B cell (primary cell): ENCODE measurements at regions of chr14 and their contacts with region 1.

Region 1: DNA sequence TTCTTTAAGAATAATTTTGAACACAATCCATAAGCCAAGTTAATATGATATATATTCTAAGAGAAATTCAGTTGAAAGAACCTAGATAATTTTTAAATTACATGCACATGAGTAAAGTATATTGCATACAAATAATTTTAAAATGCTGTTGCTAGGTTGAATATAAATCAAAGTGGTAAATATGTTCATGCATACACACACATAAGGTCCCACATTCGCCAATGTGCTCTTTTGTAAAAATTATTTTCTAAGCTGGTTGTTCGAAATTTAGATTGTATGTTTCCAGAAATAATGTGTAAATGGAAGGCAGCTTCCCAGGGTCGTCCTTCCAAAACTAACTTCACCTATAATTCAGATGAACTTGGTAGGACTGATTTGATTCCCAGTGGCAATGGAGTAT is 173.7 kb upstream of the CCDC196 start:
- DNase-seq: no peak
- ATAC-seq: no peak
- H3K4me3 ChIP-seq: no peak overlapping the region
- H3K4me3 Mint-ChIP-seq: no peak overlapping the region
- H3K27ac ChIP-seq: no peak overlapping the region
- H3K27ac Mint-ChIP-seq: no peak overlapping the region
- H3K4me1 ChIP-seq: no peaks in the 10 kb centered on the region
- H3K4me1 Mint-ChIP-seq: no peaks in the 10 kb centered on the region
- H3K27me3 ChIP-seq: peaks cover 0 to 5% (median 0%) of the 10 kb centered on the region in 4 experiments
- H3K27me3 Mint-ChIP-seq: no peaks in the 10 kb centered on the region
- CTCF ChIP-seq: no peak

Region 2: DNA sequence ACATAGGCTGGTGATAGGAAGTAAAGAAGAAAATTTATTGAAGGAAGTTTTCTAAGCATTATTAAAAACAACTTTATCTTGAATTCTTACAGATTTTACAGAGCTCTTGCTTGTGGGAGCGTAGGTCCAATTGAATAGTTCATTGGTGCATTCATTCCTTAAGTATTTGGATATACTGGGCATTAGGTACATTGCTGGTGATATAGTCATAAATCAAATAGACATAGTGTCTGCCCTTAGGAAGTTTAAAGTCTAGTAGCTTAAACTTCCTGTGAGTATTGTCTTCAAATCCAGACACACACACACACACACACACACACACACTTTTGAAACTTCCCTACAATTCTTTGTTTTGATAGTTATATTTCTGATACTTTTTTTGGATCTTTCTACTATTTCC is 673.2 kb before region 1 on chr14:
- CTCF ChIA-PET with region 1: no interaction called
- POLR2A ChIA-PET with region 1: interaction called, 10 read pairs
- intact Hi-C with region 1: no loop called
- DNase-seq: no peak
- ATAC-seq: no peak
- H3K4me3 ChIP-seq: no peak overlapping the region
- H3K4me3 Mint-ChIP-seq: no peak overlapping the region
- H3K27ac ChIP-seq: no peak overlapping the region
- H3K27ac Mint-ChIP-seq: no peak overlapping the region
- H3K4me1 ChIP-seq: peaks cover 9 to 13% of the 10 kb centered on the region in 2 donors
- H3K4me1 Mint-ChIP-seq: peaks cover 32% of the 10 kb centered on the region
- H3K27me3 ChIP-seq: no peaks in the 10 kb centered on the region
- H3K27me3 Mint-ChIP-seq: no peaks in the 10 kb centered on the region
- CTCF ChIP-seq: no peak

Region 3: DNA sequence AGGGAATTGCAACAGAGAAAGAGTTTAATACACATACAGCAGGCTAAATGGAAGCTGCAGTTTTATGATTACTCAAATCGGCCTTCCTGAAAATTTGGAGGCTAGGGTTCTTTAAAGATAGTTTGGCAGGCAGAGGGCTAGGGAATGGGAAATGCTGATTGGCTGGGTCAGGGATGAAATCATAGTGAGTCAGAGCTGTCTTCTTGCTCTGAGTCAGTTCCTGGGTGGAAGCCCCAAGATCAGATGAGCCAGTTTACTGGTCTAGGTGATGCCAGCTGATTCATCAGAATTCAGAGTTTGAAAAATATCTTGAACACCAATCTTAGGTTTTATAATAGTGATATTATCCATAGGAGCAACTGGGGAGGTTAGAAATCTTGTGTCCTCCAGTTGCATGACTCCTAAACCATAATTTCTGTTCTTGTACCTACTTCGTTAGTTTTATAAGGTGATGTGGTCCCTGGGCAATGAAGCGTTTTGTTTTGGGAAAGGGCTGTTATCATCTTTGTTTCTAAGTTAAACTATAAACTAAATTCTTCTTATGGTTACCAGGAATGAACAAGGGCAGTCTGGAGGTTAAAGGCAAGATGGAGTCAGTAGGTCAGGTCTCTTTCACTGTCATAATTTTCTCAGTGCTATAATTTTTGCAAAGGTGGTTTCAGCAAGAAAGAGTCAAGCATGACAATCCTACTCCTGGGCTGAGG is 84.0 kb before region 1 on chr14:
- CTCF ChIA-PET with region 1: no interaction called
- POLR2A ChIA-PET with region 1: no interaction called
- intact Hi-C with region 1: no loop called
- DNase-seq: no peak
- ATAC-seq: no peak
- H3K4me3 ChIP-seq: no peak overlapping the region
- H3K4me3 Mint-ChIP-seq: no peak overlapping the region
- H3K27ac ChIP-seq: no peak overlapping the region
- H3K27ac Mint-ChIP-seq: no peak overlapping the region
- H3K4me1 ChIP-seq: peaks cover 0 to 6% of the 10 kb centered on the region in 2 donors
- H3K4me1 Mint-ChIP-seq: peaks cover 9% of the 10 kb centered on the region
- H3K27me3 ChIP-seq: no peaks in the 10 kb centered on the region
- H3K27me3 Mint-ChIP-seq: peaks cover 18% of the 10 kb centered on the region
- CTCF ChIP-seq: no peak

Region 4: GRCh38 chr14:66268802-66269334 is 43.6 kb before region 1 on chr14:
- CTCF ChIA-PET with region 1: no interaction called
- POLR2A ChIA-PET with region 1: no interaction called
- intact Hi-C with region 1: no loop called
- DNase-seq: no peak
- ATAC-seq: no peak
- H3K4me3 ChIP-seq: no peak overlapping the region
- H3K4me3 Mint-ChIP-seq: no peak overlapping the region
- H3K27ac ChIP-seq: no peak overlapping the region
- H3K27ac Mint-ChIP-seq: no peak overlapping the region
- H3K4me1 ChIP-seq: no peaks in the 10 kb centered on the region
- H3K4me1 Mint-ChIP-seq: no peaks in the 10 kb centered on the region
- H3K27me3 ChIP-seq: no peaks in the 10 kb centered on the region
- H3K27me3 Mint-ChIP-seq: peaks cover 20% of the 10 kb centered on the region
- CTCF ChIP-seq: no peak